Common myeloid progenitor, CD34-positive (primary cell): ENCODE measurements at regions of chr17 and their contacts with region 1.

Region 1: DNA sequence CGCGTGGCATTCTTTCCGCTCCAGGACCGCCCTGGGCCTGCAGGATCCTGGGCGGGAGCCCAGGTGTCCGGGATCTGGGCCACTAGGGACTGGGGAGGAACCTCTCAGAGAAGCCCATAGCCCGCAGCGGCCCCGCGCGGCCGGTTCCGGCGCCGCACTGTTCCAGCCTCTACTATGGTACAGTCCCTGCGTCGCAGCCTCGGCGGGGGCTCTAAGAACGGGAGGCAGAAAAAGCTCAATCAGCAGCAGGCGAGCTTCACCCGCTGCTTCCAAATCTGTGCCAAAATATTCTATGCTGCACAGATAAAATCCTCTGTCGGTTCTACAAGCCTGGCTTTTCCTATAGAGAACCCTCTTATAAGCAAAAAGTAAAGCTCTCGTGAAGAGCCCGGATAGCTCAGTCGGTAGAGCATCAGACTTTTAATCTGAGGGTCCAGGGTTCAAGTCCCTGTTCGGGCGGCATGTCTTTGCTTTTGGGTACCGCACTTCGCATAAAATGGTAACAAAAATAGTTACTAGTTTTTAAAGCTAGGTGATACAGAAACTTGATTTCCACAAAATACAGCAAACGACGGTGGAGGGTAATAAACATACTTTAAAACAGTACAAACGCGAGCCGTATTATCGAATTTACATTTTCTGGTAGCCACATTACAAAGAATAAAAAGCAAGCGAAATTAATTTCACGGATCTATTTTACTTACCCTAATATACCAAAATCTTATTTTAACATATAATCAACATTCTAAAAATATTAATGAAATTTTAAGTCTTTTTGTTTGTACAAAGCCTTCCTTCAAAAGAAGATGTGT is 661 bp upstream of the ALOXE3 start:
- DNase-seq: peak; percentile 86 to 93 (median 90)
- H3K4me3 ChIP-seq: peak overlapping the region; percentile 44 to 94 (median 84)
- H3K27ac ChIP-seq: peak overlapping the region in 1 of 2 experiments; percentile 58
- H3K4me1 ChIP-seq: peaks cover 2 to 57% (median 53%) of the 10 kb centered on the region in 4 experiments
- H3K27me3 ChIP-seq: peaks cover 4 to 64% (median 32%) of the 10 kb centered on the region in 5 experiments

Region 2: DNA sequence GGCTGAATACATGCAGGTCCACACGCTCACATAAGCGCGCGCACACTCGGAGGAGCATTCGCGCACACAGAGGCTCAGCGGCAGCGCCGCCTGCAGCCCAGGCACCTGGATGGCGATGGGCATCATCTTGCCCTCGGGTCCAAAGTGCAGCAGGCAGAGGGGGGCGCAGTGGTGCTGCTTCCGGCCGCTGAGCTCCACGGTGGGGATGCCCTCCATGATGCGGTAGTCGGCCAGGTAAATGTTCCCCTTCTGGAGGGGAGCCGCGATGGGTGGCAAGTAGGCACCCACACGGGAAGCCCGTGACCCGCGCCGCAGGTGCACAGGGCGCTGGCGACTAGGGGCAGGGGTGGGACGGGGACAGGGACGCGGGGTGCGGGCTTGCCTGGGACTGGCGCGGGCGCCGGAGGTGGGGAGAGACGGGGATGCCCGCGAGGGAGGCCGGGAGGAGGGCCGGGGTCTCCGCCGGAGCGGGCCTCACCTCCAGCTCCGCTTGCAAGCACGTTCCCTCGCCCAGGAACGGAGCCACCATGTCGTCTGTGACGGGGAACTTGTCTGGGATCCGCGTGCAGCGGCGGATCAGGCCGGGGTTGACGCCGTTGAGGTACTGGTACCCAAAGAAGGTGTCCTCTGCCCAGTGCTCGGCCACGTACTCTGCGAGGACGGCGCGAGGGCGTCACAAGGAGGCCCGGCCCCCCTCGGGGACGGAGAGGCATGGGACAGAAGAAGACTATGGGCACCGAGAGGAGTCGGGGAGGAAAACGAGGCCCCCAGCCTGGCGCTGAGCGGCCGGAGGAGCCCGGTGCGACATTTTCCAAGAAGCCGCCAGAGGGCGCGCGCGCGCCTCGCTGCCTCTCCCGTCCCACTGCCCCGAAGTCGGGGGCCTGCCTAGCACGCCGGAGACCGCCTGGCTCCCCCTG is 39.4 kb before region 1 on chr17:
- CTCF ChIA-PET with region 1: interaction called, 24 read pairs
- POLR2A ChIA-PET with region 1: interaction called, 3 read pairs
- DNase-seq: peak; percentile 78 to 90 (median 88)
- H3K4me3 ChIP-seq: peak overlapping the region; percentile 31 to 84 (median 55)
- H3K27ac ChIP-seq: no peak overlapping the region
- H3K4me1 ChIP-seq: peaks cover 0 to 14% (median 12%) of the 10 kb centered on the region in 4 experiments
- H3K27me3 ChIP-seq: peaks cover 0 to 12% (median 8%) of the 10 kb centered on the region in 5 experiments

Region 3: GRCh38 chr17:8138672-8139371 is 19.8 kb after region 1 on chr17:
- CTCF ChIA-PET with region 1: interaction called, 20 read pairs
- POLR2A ChIA-PET with region 1: interaction called, 6 read pairs
- DNase-seq: peak; percentile 94 to 97 (median 97)
- H3K4me3 ChIP-seq: peak overlapping the region; percentile 33 to 81 (median 72)
- H3K27ac ChIP-seq: peak overlapping the region; percentile 40 to 80
- H3K4me1 ChIP-seq: peaks cover 5 to 23% (median 20%) of the 10 kb centered on the region in 4 experiments
- H3K27me3 ChIP-seq: no peaks in the 10 kb centered on the region

Region 4: DNA sequence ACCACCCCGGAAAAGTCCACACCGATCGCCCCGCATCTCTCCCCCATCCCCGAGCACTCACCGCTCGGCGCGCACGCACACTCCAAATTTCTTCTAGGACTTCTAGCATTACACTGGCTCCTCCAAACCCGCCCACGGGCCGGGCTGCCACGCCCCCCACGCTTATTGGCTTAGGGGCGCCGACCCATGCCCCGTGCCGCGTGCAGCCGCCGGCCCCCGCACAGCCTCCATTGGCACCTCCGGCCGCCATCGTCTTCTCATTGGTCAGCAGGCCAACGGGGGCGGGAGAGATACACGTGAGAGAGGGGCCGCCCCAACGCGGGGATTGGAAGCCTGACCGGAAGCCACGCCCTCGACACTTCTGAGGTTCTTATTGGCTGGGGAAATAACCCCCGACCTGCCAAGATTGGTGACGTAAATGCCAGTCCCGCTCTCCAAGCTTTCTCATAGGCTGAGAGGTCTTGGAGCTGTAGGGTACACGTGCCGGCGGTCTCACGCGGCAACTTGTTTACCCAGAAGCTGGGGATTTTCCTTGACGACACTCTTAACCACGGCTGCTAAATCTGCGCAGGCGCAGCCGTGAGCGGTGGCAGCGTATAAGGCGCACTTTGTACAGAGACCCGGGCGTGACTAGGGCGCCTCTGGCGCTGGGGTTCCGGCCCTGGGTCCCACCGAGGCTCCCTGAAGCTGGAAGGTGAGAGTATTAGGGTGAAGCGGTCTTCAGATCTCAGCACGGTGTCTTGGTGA is 37.4 kb after region 1 on chr17:
- CTCF ChIA-PET with region 1: interaction called, 25 read pairs
- POLR2A ChIA-PET with region 1: interaction called, 5 read pairs
- DNase-seq: peak; percentile 100
- H3K4me3 ChIP-seq: peak overlapping the region; percentile 61 to 88 (median 73)
- H3K27ac ChIP-seq: peak overlapping the region; percentile 91 to 96
- H3K4me1 ChIP-seq: peaks cover 15 to 68% (median 65%) of the 10 kb centered on the region in 4 experiments
- H3K27me3 ChIP-seq: no peaks in the 10 kb centered on the region

Region 5: DNA sequence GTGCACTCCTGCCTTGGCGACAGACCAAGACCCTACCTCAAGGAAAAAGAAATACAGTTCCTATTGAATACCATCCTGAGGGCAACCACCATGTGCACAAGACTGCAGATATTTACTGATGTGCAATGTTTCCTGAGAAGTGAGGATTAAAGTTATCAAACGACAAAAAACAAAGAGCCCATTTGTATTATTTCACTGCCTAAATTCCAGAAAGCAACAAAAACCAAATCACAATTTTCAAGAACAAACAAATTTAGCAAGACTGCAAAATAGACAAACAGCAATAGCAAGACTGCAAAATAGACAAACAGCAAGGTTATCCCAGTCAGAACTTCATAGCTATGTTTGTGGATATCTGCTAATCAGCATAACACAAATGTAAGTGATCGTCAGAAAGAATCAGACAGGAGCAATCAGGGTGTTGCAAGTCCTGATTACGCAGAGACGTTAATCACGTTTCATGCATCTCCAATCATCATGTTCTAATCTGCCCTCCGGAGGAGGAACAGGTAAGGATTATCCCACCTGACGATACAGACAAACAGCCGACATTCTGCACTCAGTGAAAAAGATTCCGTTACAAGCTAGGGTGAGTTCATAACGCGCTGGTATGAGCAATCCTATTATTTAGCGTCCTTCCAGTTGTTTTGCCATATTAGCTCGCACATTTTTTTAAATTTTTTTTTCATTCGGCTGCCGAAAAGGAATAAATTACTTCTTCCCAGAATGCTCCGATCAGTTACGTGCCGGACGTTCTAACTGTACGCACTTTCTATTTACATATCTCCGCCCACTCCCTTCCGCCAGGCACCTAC is 54.3 kb after region 1 on chr17:
- CTCF ChIA-PET with region 1: interaction called, 4 read pairs
- POLR2A ChIA-PET with region 1: interaction called, 16 read pairs
- DNase-seq: peak; percentile 96 to 98 (median 97)
- H3K4me3 ChIP-seq: peak overlapping the region in 6 of 7 experiments; percentile 63 to 97 (median 70)
- H3K27ac ChIP-seq: peak overlapping the region; percentile 100
- H3K4me1 ChIP-seq: peaks cover 8 to 47% (median 33%) of the 10 kb centered on the region in 4 experiments
- H3K27me3 ChIP-seq: no peaks in the 10 kb centered on the region